HEK293T (cell line): ENCODE measurements at regions of chr3 and their contacts with region 1.

Region 1: GRCh38 chr3:52220380-52221026 is 4.9 kb downstream of the TLR9 start:
- DNase-seq: peak; percentile 88

Region 2: GRCh38 chr3:52197842-52198668 is 22.4 kb before region 1 on chr3 and contains the start of gene ALAS1:
- CTCF ChIA-PET with region 1: interaction called, 12 read pairs
- POLR2A ChIA-PET with region 1: interaction called, 4 read pairs
- DNase-seq: peak; percentile 99

Region 3: DNA sequence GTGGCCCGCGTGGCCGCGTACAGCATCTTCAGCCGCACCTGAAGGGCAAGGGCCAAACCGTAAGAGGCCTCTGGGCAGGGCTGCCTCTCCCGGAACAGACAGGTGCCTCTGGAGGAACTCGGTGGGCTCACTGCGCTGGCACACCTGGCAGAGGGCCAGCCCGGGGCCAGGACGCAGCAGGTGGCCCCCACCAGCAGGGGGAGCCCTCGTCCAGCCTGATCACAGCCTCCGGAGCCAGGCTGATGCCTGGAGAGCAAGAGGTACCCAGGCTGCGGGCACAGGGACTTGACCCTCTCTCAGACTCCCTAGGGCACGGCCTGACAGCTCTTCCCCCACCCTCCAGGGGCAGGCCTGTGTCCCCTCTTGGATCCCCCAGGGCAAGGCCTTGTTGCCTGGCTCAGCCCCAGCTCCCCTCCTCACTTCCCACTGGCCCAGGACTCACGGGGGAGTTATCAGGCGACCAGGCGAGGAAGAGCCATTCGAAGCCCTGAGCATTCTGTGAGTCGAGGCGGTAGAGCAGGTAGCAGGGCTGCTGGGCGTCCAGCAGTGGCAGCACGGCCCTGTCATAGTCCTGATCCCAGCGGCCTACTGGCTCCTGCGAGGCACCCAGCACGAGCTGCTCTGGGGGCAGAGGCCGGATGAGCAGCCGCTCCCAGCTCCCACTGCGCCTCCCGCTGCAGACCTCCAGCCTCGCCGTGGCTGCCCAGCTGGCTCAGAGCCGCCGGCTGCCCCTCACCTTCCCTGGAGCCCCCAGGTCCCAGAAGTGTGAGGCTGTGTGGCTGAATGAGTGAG is 11.2 kb after region 1 on chr3:
- CTCF ChIA-PET with region 1: interaction called, 16 read pairs
- POLR2A ChIA-PET with region 1: no interaction called
- DNase-seq: peak; percentile 81

Region 4: DNA sequence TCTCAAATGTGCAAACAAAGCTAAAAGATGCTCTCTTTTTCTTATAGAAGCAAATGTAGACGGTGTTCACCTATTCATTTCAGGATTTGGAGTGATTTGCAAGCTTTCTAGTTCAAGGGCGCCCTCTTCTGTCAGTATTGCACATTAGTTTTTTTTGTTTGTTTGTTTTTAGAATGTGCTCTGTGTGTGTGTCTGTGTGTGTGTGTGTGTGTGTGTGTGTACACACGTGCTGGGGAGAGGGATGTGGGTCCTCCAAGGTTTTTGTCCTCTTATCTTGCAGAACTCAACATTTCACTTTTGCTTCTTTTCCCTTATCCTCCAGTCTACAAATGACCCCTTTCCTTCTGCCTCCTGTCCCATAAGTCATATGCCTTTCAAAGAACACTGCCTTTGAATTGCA is 119.1 kb after region 1 on chr3:
- CTCF ChIA-PET with region 1: interaction called, 25 read pairs
- POLR2A ChIA-PET with region 1: no interaction called
- DNase-seq: peak; percentile 60